ENCODE measurements at regions of chr13 and their contacts with region 1.

Region 1: DNA sequence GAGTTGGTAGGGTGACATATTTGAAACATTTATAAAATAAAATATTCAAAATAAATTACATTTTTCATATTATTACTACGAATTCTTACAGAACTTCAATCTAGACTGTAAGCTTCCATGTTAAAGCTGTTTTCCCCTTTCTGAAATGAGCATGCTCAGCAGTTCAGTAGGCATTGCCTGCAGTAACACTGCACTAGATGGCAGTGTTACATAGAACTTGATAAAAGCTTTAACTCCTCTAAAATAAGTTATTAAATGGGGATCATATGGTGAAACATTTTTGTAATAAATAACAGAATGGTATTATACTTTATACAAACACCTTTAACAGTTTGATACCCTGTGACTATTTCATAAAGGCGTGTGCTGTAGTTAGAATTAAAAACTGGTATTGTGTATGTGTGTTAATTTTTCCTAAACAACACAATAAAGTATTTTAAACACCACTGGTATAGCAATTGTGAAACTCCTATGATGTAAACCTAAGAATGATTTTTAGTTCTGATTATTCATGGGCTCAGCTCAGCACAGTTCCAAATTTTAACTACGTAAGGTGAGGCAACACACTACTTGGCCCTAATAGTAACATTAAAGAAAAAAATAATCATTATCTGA is 11.6 kb upstream of the GPR18 start:
- DNase-seq: peak; percentile 41
- ATAC-seq: peak; percentile 56
- H3K4me3 Mint-ChIP-seq: no peak overlapping the region
- H3K27ac Mint-ChIP-seq: no peak overlapping the region
- H3K4me1 Mint-ChIP-seq: peaks cover 70% of the 10 kb centered on the region
- H3K27me3 Mint-ChIP-seq: no peaks in the 10 kb centered on the region

Region 2: GRCh38 chr13:99027260-99027659 is 242.5 kb before region 1 on chr13:
- CTCF ChIA-PET with region 1: interaction called, 10 read pairs
- POLR2A ChIA-PET with region 1: no interaction called
- intact Hi-C with region 1: loop called (anchors 2 to 10 kb)
- DNase-seq: peak; percentile 46
- ATAC-seq: peak; percentile 41
- H3K4me3 Mint-ChIP-seq: no peak overlapping the region
- H3K27ac Mint-ChIP-seq: peak overlapping the region; percentile 91
- H3K4me1 Mint-ChIP-seq: peaks cover 85% of the 10 kb centered on the region
- H3K27me3 Mint-ChIP-seq: no peaks in the 10 kb centered on the region

Region 3: DNA sequence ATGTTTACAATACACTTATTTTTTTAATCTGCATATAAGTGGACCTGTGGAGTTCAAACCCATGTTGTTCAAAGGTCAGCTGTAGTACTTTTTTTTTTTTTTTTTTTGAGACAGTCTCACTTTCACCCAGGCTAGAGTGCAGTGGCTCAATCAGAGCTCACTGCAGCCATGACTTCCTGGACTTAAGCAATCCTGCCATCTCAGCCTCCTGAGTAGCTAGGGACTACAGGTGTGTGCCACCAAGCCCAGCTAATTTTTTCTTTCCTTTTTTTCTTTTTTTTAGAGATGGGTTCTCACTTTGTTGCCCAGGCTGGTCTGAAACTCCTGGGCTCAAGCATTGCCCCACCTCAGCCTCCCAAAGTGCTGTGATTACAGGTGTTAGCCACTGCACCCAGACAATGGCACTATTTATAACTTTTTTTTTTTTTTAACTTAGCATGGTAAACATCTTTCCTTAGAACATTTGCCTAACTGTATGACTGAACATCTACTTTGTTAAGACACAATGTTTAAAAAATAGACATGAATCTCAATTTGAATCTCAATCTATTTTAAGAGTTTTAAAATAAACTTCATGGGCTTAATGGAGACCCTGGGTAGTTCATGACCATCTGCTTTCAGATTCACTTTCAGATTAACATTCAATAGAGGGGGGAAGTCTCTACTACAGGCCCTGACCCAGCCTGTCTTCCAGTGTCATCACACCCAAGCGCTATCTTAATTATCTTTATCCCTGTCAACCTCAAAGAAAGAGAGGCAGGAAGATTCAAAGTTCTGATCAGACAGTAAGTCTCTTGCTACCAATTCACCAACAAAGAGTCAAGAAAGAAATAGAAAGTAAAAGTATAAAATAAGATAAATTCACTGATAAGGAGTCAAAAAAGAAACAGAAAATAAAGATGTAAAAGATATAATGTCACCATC is 194.2 kb before region 1 on chr13:
- CTCF ChIA-PET with region 1: no interaction called
- POLR2A ChIA-PET with region 1: no interaction called
- intact Hi-C with region 1: no loop called
- DNase-seq: no peak
- ATAC-seq: peak; percentile 87
- H3K4me3 Mint-ChIP-seq: peak overlapping the region; percentile 51
- H3K27ac Mint-ChIP-seq: peak overlapping the region; percentile 93
- H3K4me1 Mint-ChIP-seq: peaks cover 70% of the 10 kb centered on the region
- H3K27me3 Mint-ChIP-seq: no peaks in the 10 kb centered on the region

Region 4: DNA sequence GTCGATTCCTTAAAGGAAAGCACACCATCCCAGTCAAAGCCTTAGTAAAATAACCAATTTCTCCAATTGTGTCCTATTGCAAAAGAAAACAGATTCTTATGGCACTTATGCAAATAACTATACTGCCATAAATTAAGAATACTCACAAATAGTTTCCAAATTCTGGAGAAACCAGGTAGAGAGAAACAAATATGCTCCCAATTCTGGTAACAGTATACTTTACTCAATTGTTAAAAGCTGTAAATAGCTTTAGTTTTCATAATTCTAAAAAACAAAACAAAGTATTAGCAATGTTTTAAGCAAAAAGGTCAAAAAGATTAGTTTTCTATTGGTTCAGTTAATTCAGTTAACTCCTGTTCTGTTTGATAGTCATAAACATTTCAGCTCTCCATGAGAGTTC is 87.3 kb before region 1 on chr13:
- CTCF ChIA-PET with region 1: interaction called, 169 read pairs
- POLR2A ChIA-PET with region 1: no interaction called
- intact Hi-C with region 1: no loop called
- DNase-seq: no peak
- ATAC-seq: no peak
- H3K4me3 Mint-ChIP-seq: no peak overlapping the region
- H3K27ac Mint-ChIP-seq: no peak overlapping the region
- H3K4me1 Mint-ChIP-seq: peaks cover 31% of the 10 kb centered on the region
- H3K27me3 Mint-ChIP-seq: no peaks in the 10 kb centered on the region

Region 5: DNA sequence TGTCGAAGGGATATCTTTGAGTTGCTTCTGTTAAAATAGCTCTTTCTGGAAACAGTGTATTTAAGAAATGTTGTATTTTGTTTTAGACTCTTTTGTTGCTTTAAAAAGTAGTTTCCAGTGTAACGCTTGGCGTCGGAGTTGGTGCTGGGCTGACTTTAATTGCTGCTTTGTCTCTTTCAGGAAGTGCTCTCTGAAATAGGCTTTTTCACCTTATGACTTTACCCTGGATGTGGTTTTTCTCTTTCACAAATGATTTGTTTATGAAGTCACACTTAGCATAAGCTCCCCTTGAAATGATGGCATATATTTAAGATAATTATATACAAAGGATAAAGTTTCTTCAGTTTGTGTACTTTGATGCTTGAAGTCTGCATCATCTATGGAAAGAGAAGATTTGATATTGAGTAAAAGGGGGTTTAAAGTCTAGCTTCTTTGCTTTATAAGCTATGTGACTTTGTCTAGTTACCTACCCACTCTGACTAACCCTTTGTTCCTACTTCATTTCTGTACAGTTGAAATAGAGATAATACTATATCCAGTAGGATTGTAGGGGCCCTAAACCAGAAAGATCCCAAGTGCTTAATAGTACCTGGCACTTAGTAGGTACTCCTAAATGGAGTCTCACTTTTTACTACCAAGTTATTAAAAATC is 11.4 kb before region 1 on chr13 and contains the start of gene GPR18:
- CTCF ChIA-PET with region 1: interaction called, 21 read pairs
- POLR2A ChIA-PET with region 1: interaction called, 3 read pairs
- intact Hi-C with region 1: no loop called
- DNase-seq: peak; percentile 62
- ATAC-seq: peak; percentile 88
- H3K4me3 Mint-ChIP-seq: peak within 1 kb of the TSS; percentile 80
- H3K27ac Mint-ChIP-seq: peak within 1 kb of the TSS; percentile 95
- H3K4me1 Mint-ChIP-seq: peaks cover 76% of the 10 kb centered on the region
- H3K27me3 Mint-ChIP-seq: no peaks in the 10 kb centered on the region
- total RNA-seq, gene GPR18: 6.0 to 9.5 TPM

Region 6: DNA sequence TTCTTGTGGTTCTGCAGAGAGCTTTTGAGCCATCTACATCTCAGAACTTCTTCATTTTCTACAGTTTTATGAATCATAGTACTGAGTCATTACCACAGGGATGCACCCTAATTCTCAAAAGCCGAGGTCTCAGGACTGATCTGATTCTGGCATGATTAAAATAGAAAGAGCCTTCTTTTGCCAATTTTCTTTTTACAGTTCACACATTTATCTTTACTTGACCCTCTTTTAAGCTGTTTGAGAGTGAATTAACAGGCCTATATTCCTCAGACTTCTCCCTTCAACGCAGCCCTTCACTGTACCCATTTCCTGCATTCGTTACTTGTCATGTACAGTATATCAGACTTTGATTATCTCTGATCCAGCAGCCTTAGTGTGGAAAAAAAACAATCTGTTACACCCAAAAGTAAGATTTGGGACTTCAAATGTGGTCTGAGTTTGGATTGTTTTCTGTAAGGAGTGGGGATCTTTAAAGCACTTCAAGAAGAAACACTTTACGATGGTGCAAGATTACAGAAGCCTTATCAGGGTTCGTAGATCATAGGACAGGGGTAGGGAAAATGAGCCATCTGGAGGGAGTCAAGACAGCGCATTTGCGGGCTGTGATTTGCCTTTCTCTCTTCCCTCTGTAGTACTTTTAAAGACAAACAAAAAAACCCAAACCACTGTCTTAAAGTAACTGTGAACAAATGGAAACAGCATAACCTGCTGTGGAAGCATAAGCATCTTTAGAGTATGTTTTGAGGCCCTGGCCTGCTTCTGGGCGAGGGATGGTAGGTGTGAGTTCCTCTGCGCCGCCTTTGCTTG is 52.8 kb after region 1 on chr13:
- CTCF ChIA-PET with region 1: interaction called, 6 read pairs
- POLR2A ChIA-PET with region 1: interaction called, 3 read pairs
- intact Hi-C with region 1: loop called (anchors 1 to 2 kb)
- DNase-seq: peak; percentile 66
- ATAC-seq: peak; percentile 78
- H3K4me3 Mint-ChIP-seq: peak overlapping the region; percentile 26
- H3K27ac Mint-ChIP-seq: peak overlapping the region; percentile 93
- H3K4me1 Mint-ChIP-seq: peaks cover 81% of the 10 kb centered on the region
- H3K27me3 Mint-ChIP-seq: no peaks in the 10 kb centered on the region

Region 7: DNA sequence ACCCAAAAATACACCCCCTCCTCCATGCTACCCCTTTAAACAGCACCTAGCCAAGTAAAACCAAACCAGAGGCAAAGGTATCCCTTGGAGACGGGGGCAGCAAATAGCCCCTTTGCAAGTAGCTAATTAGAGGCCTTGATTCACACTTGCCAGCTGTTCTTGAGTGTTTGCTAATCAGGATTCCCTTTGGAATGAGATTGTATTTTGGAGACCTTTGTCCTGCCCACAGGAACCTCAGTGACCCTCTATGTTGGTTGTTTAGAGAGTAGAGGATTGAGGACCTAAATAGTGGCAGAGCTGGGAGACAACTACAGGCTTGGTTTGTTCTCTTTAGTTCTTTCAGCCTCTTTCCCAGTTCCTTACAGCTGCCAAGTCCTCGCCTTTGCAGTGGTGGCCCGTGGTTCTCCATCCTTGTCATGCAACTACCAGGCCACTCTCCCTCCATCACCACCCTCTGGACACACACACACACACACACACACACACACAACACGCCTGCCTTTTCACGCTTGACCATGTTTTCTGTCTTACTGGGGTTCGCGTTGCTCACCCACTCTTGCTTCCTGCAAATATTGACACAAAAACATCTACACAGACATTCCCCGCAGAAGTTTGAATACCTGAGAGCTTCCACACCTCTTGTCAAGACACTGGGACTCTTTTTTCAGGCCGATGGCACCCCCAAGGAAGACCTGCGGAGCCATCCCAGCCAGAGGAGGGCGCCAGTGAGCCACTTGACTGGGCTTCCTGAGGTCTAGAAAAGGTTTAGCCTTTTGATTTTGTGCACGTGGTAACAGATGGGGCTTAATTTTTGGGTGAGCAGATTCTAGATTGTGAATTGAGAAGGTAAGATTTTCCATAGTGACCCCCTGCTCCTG is 117.4 kb after region 1 on chr13:
- CTCF ChIA-PET with region 1: interaction called, 53 read pairs
- POLR2A ChIA-PET with region 1: interaction called, 3 read pairs
- intact Hi-C with region 1: loop called in 1 of 2 experiments (anchors 1 kb)
- DNase-seq: peak; percentile 94
- ATAC-seq: peak; percentile 62
- H3K4me3 Mint-ChIP-seq: no peak overlapping the region
- H3K27ac Mint-ChIP-seq: peak overlapping the region; percentile 76
- H3K4me1 Mint-ChIP-seq: peaks cover 63% of the 10 kb centered on the region
- H3K27me3 Mint-ChIP-seq: no peaks in the 10 kb centered on the region

Region 8: GRCh38 chr13:99501184-99501847 is 231.6 kb after region 1 on chr13 and contains the start of gene TM9SF2:
- CTCF ChIA-PET with region 1: interaction called, 6 read pairs
- POLR2A ChIA-PET with region 1: no interaction called
- intact Hi-C with region 1: loop called (anchors 5 kb)
- DNase-seq: peak; percentile 97
- ATAC-seq: peak; percentile 69
- H3K4me3 Mint-ChIP-seq: peak within 1 kb of the TSS; percentile 96
- H3K27ac Mint-ChIP-seq: peak within 1 kb of the TSS; percentile 97
- H3K4me1 Mint-ChIP-seq: peaks cover 68% of the 10 kb centered on the region
- H3K27me3 Mint-ChIP-seq: no peaks in the 10 kb centered on the region
- total RNA-seq, gene TM9SF2: 51.8 to 53.4 TPM

Measured in activated CD4-positive, alpha-beta T cell treated with anti-CD3 and anti-CD28 coated beads for 36 hours (primary cell).